Colonic mucosa (tissue), 4 donors: ENCODE measurements at regions of chr12 and their contacts with region 1.

Region 1: DNA sequence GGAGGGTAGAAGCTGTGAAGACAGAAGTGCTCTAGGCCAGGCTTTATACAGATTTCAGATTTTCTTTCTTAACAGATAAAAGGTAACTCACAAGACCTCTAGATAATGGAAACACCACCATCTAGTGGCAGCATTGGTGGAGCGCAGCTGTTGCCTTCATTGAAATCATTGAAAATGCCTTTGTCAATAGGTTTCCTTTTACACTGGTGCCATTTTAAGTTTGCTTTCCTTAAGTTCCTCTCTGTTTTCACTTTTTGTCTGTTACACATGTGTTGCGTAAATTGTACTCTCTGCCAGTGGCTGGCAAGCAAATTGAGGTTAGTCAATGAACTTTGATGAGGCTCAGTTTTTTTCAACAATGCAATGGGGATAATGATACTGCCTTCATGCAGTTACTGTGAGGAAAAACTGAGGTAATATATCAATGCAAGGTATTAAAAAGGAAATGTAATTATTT is 31.1 kb downstream of the ALDH1L2 start:
- DNase-seq: peak; percentile 83
- H3K4me3 ChIP-seq: no peak overlapping the region
- H3K27ac ChIP-seq: no peak overlapping the region
- H3K4me1 ChIP-seq: no peaks in the 10 kb centered on the region
- H3K27me3 ChIP-seq: no peaks in the 10 kb centered on the region
- CTCF ChIP-seq: peak; percentile 95

Region 2: DNA sequence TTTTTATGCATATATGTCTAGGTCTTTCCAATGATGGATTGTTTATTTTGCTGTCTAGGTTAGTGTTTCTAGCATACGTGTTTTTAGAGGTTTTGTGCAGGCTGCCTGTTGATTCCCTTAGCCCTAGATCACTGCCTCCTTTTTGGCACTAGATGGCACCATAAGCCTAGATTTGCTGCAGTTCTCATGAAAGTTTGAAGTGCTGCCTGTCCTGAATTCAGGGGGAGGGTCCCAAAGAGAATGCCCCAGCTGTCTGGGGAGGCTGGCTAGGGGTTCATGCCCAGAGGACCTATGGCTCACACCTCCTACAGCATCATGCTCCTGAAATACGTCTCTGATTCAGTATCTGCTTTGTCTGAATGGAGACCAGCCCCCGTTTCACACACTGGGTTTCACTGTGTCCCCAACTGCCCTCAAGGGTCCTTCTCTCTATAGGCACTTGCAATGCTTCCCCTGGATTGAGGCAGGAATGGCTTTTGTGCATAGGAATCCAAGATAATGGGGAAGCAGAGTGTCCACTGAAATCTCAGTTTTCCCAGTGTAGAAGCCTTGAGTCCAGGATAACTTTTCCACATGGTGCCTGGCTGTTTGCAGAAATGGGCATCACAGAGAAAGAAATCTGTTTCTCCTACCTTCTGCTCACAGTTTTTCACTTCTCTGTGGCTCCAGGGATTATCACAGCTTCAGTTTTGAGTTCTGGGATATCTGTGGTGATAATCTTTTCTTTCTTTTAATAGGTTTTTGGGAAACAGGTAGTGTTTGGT is 851.7 kb before region 1 on chr12:
- intact Hi-C with region 1: loop called (anchors 10 kb)
- DNase-seq: peak; percentile 44
- H3K4me3 ChIP-seq: no peak overlapping the region
- H3K27ac ChIP-seq: no peak overlapping the region
- H3K4me1 ChIP-seq: no peaks in the 10 kb centered on the region
- H3K27me3 ChIP-seq: no peaks in the 10 kb centered on the region
- CTCF ChIP-seq: peak; percentile 79

Region 3: GRCh38 chr12:104381731-104382480 is 671.2 kb before region 1 on chr12:
- intact Hi-C with region 1: loop called (anchors 5 kb)
- DNase-seq: peak; percentile 82
- H3K4me3 ChIP-seq: no peak overlapping the region
- H3K27ac ChIP-seq: no peak overlapping the region
- H3K4me1 ChIP-seq: no peaks in the 10 kb centered on the region
- H3K27me3 ChIP-seq: no peaks in the 10 kb centered on the region
- CTCF ChIP-seq: peak; percentile 94

Region 4: DNA sequence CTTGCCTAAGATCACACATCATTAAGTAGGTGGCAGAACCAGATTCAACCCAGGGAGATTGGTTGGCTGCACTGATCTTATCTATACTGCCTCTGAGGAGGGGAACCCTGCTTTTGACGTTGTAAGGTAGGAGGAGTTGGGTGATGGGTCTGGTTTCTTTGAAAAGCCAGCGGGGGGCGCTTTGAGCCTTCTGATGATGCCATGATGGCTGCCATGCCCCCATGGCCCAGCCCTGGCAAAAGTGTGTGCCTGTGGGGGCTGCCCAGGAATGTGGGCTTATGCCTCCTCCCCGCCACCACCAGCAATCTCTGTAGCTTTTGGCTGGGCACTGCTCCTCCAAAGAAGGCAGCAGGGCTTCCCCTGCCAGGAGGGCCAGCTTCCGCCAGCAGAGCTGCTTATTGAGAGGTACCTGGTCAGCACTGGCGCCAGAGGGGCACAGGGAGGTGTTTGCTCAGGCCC is 319.4 kb before region 1 on chr12:
- intact Hi-C with region 1: loop called (anchors 5 kb)
- DNase-seq: no peak
- H3K4me3 ChIP-seq: no peak overlapping the region
- H3K27ac ChIP-seq: no peak overlapping the region
- H3K4me1 ChIP-seq: no peaks in the 10 kb centered on the region
- H3K27me3 ChIP-seq: no peaks in the 10 kb centered on the region
- CTCF ChIP-seq: peak; percentile 11